AG04449 (cell line): ENCODE measurements at regions of chr6 and their contacts with region 1.

Region 1: GRCh38 chr6:144013486-144013909 is 5.4 kb upstream of the PLAGL1 start:
- DNase-seq: no peak
- H3K4me3 ChIP-seq: no peak overlapping the region
- CTCF ChIP-seq: peak; percentile 84

Region 2: DNA sequence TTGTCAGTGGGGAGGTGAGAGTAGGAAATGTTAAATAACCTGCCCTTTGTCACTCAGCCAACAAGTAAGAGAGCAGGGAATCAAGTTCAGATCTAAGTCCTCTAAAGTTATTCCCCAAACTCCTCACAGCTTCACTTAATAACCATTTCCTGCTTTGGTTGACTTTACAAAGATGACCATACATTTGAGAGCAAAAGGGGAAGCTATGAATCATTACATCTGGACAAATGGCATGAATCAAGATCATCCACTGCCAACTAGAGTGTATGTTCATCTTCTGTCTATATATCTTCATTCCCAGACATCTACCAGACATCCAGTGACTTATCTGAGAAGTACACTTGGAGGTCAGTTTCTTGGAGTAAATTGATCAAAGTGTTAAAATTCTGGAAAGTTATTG is 1053.4 kb before region 1 on chr6:
- CTCF ChIA-PET with region 1: no interaction called
- POLR2A ChIA-PET with region 1: no interaction called
- DNase-seq: no peak
- H3K4me3 ChIP-seq: no peak overlapping the region
- CTCF ChIP-seq: no peak

Region 3: GRCh38 chr6:143441680-143442545 is 571.6 kb before region 1 on chr6:
- CTCF ChIA-PET with region 1: no interaction called
- POLR2A ChIA-PET with region 1: no interaction called
- DNase-seq: peak; percentile 40
- H3K4me3 ChIP-seq: no peak overlapping the region
- CTCF ChIP-seq: no peak

Region 4: DNA sequence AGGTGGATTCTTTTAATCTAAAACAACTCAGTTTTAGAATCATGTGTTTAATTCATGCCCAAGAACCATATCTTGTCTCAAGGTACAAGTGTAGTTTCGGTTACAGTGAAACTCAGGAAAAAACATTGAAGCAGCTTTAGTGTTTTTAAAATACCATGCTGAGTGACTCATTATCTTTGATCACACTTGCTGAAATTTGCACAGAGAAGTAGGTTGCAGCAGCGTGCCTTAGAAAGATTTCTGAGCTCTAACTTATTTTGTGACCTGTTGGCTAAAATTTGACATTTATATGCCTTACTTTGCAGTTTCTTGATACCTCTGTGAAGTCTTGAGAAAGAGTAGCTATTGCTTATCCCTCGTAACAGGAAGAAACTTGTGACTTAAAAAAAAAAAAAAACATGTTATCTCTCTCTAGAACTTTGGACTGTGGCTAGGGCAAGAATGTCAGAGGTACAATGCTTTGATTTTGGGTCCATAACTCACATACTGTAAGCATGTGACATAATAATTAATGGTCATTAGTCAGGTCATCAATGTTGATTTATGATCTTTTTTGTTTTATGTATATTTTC is 467.4 kb before region 1 on chr6:
- CTCF ChIA-PET with region 1: no interaction called
- POLR2A ChIA-PET with region 1: no interaction called
- DNase-seq: no peak
- H3K4me3 ChIP-seq: no peak overlapping the region
- CTCF ChIP-seq: no peak

Region 5: DNA sequence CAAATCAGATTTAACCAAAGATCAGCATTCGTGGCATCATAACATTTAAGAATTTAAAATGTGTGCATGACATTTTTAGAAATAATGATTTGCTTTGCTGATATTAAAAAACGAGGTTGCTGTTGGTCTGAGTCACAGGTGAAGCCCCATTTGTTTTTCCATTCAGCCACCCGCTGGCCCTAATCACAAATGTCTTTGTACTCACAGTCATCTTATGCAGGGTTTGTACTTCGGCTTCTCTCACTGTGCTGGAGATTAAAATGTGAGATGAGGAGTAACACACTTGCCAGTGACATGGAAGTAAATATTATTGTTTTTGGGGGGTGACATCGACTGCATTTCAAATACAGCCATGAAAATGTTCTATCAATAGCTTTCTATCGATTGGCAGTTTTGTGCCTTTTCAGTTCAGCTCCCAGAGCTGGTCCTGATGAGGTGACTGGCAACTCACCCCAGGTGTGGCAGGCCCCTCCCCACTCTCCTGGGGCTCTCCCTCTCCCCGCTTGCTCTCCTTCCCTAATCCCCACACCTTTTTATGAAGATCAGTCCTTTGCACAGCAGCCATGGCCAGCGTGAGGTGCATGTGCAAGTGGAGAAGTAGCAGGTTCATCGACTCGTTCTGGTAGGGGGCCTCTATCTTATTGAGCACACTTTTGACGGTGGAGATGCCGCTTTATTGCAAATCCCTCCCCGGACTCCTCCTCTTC is 443.2 kb before region 1 on chr6:
- CTCF ChIA-PET with region 1: interaction called, 243 read pairs
- POLR2A ChIA-PET with region 1: interaction called, 5 read pairs
- DNase-seq: no peak
- H3K4me3 ChIP-seq: no peak overlapping the region
- CTCF ChIP-seq: no peak

Region 6: GRCh38 chr6:143583542-143584327 is 429.8 kb before region 1 on chr6:
- CTCF ChIA-PET with region 1: interaction called, 243 read pairs
- POLR2A ChIA-PET with region 1: interaction called, 3 read pairs
- DNase-seq: no peak
- H3K4me3 ChIP-seq: no peak overlapping the region
- CTCF ChIP-seq: no peak

Region 7: GRCh38 chr6:143940011-143940597 is 73.4 kb before region 1 on chr6:
- CTCF ChIA-PET with region 1: interaction called, 102 read pairs
- POLR2A ChIA-PET with region 1: no interaction called
- DNase-seq: no peak
- H3K4me3 ChIP-seq: no peak overlapping the region
- CTCF ChIP-seq: peak; percentile 48

Region 8: GRCh38 chr6:143970456-143971218 is 42.9 kb before region 1 on chr6:
- CTCF ChIA-PET with region 1: interaction called, 10 read pairs
- POLR2A ChIA-PET with region 1: no interaction called
- DNase-seq: no peak
- H3K4me3 ChIP-seq: no peak overlapping the region
- CTCF ChIP-seq: no peak

Region 9: GRCh38 chr6:143999406-143999805 is 14.1 kb before region 1 on chr6:
- CTCF ChIA-PET with region 1: interaction called, 15 read pairs
- POLR2A ChIA-PET with region 1: interaction called, 3 read pairs
- DNase-seq: no peak
- H3K4me3 ChIP-seq: no peak overlapping the region
- CTCF ChIP-seq: no peak

Region 10: DNA sequence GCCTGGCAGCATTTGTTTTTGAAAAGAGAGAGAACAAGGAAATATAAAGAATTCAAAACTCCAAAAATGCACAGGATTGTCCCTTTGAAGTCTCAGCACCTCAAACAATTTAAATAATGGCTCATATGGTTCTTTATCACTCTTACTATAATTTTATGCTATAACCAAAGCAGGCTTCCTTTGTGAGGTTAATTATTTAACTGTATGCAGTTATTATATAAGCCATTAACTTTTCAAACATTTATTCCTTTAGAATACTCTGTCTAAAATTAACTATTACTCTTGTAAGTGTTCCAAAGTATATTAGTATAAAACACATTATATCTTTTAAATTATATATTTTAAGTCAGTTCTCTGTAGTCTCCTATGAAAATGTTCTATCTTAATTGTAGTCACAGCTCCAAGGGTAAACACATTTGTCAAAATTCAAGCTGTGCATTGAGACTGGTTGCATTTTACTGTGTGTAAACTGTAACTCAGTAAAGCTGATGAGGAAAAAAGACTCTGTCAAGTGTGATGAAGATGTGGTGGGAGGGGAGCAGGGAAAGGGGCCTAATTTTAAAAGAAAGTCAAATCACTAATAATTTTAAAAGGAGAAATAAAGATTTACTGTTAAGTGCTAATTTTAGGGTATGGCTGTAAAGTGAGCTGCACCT is 14.6 kb after region 1 on chr6:
- CTCF ChIA-PET with region 1: interaction called, 24 read pairs
- POLR2A ChIA-PET with region 1: no interaction called
- DNase-seq: no peak
- H3K4me3 ChIP-seq: no peak overlapping the region
- CTCF ChIP-seq: no peak